Psoas muscle (tissue), 8 donors: ENCODE measurements at regions of chr1 and their contacts with region 1.

Region 1: GRCh38 chr1:19096036-19096833 is 113.8 kb downstream of the UBR4 start:
- DNase-seq: peak; percentile 29 to 69
- ATAC-seq: peak; percentile 76 to 87 (median 82)
- H3K4me3 ChIP-seq: no peak overlapping the region
- H3K27ac ChIP-seq: no peak overlapping the region
- H3K4me1 ChIP-seq: peaks cover 10% of the 10 kb centered on the region
- H3K27me3 ChIP-seq: no peaks in the 10 kb centered on the region
- CTCF ChIP-seq: peak; percentile 56

Region 2: GRCh38 chr1:18907021-18907916 is 189.0 kb before region 1 on chr1:
- intact Hi-C with region 1: loop called (anchors 2 to 5 kb)
- DNase-seq: peak; percentile 60 to 74
- ATAC-seq: peak in 2 of 4 donors; percentile 17 to 31
- H3K4me3 ChIP-seq: peak overlapping the region; percentile 12
- H3K27ac ChIP-seq: peak overlapping the region; percentile 50
- H3K4me1 ChIP-seq: peaks cover 25% of the 10 kb centered on the region
- H3K27me3 ChIP-seq: no peaks in the 10 kb centered on the region
- CTCF ChIP-seq: peak; percentile 88

Region 3: GRCh38 chr1:18999359-18999758 is 96.9 kb before region 1 on chr1:
- intact Hi-C with region 1: no loop called
- DNase-seq: no peak
- ATAC-seq: no peak
- H3K4me3 ChIP-seq: no peak overlapping the region
- H3K27ac ChIP-seq: no peak overlapping the region
- H3K4me1 ChIP-seq: no peaks in the 10 kb centered on the region
- H3K27me3 ChIP-seq: no peaks in the 10 kb centered on the region
- CTCF ChIP-seq: no peak